ENCODE measurements at regions of chr13 and their contacts with region 1.

Region 1: DNA sequence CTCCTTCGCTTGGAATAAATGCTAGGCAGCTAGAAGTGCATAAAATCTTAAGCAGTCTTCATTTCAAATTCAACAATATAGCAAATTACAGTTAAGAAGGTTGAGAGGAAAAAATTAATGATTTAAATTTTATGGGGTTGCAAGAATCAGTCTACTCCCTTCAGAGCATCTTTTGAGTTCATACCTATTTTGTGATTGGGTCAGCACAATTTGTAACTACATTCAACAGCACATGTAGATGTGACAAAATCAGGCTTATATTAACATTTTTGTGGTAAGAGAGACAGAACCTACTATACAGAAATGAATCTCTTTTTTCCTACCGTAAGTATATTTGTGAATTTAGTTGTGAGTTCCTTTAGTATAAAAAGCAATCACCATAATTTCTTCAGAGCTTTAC is 520.6 kb upstream of the HTR2A start:
- DNase-seq: no peak
- H3K4me3 ChIP-seq: no peak overlapping the region
- CTCF ChIP-seq: no peak
- POLR2A ChIP-seq: no peak

Region 2: DNA sequence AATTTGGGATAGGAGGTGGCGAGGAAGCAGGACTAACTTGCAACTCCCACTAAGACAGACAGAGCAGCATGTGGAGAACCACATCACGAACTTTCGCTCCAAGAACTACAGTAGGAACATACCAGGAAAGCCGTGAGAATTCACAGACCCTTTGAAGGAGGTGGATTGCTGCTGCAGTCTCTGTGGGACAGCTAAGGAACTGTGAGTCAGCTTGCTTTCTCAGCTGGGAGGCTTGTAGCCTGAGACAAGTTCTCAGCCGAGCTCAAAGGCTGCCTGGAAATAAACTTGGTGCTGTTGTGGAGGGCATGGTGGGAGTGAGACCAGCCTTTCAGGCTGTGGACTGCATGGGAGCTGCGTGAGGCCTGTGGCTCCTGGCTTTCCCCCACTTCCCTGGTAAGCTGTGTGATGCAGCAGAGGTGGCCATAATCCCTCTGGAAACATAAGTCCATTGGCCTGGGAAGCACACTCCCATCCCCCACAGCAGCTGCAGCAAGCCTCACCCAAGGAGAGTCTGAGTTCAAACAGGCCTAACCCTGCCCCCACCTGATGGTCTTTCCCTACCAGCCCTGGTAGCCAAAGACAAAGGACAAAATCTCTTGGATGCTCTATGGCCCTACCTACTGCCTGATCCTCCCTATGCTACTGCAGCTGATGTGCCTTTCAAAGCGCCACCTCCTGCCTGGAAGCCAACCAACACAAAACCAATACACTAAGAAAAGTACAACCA is 79.5 kb before region 1 on chr13:
- intact Hi-C with region 1: loop called (anchors 2 kb)
- DNase-seq: no peak
- H3K4me3 ChIP-seq: no peak overlapping the region
- CTCF ChIP-seq: no peak
- POLR2A ChIP-seq: no peak

Measured in lower leg skin (tissue), 4 donors.